CD14-positive monocyte (primary cell): ENCODE measurements at regions of chr14 and their contacts with region 1.

Region 1: DNA sequence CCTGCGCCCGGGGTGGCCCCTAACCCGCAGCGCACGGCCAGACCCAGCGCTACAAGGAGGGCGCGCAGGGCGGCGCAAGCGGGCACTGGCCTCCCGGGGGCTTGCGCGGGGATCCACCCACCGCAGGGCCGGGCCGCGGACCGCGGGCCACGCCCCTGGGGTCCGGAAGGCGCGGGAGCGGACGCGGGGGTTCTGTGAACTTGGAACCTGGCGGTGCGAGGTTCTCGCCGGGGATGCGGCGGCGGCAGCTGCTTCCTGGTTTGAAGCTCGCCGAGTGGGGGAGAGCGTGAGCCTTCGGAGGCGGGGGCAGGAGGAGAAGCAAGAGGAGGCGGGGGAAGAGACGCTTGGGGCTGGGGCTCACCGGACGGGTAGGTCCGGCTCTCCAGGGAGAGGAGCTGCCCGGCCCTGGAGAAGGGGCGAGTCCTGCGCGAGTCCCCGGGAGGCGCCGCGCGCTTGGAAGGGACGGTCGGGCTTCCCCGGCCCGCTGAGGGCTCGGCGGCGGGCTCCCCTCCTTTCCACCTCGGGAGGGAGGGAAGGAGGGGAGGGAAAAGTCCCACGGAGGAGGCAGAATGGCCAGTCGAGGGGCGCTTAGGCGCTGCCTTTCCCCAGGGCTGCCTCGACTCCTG is at the start of gene PRKCH:
- DNase-seq: peak; percentile 67 to 75 (median 69)
- H3K4me3 ChIP-seq: peak within 1 kb of the TSS; percentile 66 to 90 (median 73)
- H3K4me3 Mint-ChIP-seq: peak within 1 kb of the TSS in 1 of 2 donors; percentile 97
- H3K27ac ChIP-seq: peak within 1 kb of the TSS in 1 of 2 donors; percentile 62
- H3K27ac Mint-ChIP-seq: peak within 1 kb of the TSS in 4 of 7 donors; percentile 51 to 84 (median 68)
- H3K4me1 ChIP-seq: peaks cover 18 to 19% of the 10 kb centered on the region in 2 donors
- H3K4me1 Mint-ChIP-seq: peaks cover 23% of the 10 kb centered on the region
- H3K27me3 ChIP-seq: peaks cover 4 to 11% of the 10 kb centered on the region in 2 donors
- H3K27me3 Mint-ChIP-seq: peaks cover 10 to 17% (median 16%) of the 10 kb centered on the region in 3 donors
- CTCF ChIP-seq: peak; percentile 34
- polyA plus RNA-seq, gene PRKCH: 3.6 to 6.2 (median 5.4) TPM

Region 2: GRCh38 chr14:61213191-61213621 is 108.3 kb before region 1 on chr14:
- intact Hi-C with region 1: no loop called
- DNase-seq: no peak
- H3K4me3 ChIP-seq: no peak overlapping the region
- H3K4me3 Mint-ChIP-seq: peak overlapping the region in 1 of 2 donors; percentile 12
- H3K27ac ChIP-seq: no peak overlapping the region
- H3K27ac Mint-ChIP-seq: no peak overlapping the region
- H3K4me1 ChIP-seq: no peaks in the 10 kb centered on the region
- H3K4me1 Mint-ChIP-seq: peaks cover 2% of the 10 kb centered on the region
- H3K27me3 ChIP-seq: peaks cover 3 to 7% of the 10 kb centered on the region in 2 donors
- H3K27me3 Mint-ChIP-seq: peaks cover 9 to 14% (median 11%) of the 10 kb centered on the region in 3 donors
- CTCF ChIP-seq: no peak

Region 3: GRCh38 chr14:61252369-61253063 is 69.0 kb before region 1 on chr14:
- intact Hi-C with region 1: no loop called
- DNase-seq: peak; percentile 60 to 65 (median 63)
- H3K4me3 ChIP-seq: no peak overlapping the region
- H3K4me3 Mint-ChIP-seq: no peak overlapping the region
- H3K27ac ChIP-seq: no peak overlapping the region
- H3K27ac Mint-ChIP-seq: no peak overlapping the region
- H3K4me1 ChIP-seq: peaks cover 12 to 13% of the 10 kb centered on the region in 2 donors
- H3K4me1 Mint-ChIP-seq: peaks cover 22% of the 10 kb centered on the region
- H3K27me3 ChIP-seq: no peaks in the 10 kb centered on the region
- H3K27me3 Mint-ChIP-seq: peaks cover 2 to 11% (median 6%) of the 10 kb centered on the region in 3 donors
- CTCF ChIP-seq: peak; percentile 80

Region 4: DNA sequence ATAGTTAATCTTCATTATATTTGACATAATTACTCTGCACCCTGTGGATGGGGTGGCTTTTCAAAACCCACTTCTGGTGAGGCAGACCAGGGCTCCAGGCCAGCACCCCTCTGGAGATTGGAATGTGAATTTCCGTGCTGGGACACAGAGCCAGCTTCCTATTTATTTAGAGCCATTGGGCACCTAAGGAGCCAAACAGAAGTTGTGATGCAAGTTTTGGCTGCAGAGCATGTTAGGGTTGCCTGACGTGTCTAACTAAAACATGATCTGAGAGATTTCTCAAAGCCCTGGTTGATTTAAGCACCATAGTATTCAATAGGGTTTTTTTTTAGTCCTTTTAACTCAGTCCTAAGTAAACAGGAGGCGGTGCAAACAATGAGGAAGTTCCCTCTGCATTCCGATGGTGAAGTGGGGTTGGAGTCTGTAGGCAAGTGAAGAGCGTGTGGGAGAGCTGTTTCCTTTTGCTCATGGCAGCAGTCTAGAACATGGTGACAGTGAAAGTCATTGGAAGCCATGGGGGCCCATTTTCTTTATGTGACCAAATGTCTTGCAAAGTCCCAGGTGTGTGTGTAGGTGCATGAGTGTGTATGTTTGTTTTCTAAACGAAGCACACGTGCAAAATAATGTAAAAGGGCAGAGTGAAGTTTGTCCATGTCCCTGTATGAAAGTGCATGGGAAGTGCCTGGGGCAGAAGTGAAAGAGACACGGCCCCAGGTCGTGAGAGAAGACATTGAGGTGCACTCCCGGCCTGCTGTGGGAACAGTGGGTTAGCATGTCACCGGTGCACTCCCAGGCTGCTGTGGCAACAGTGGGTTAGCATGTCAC is 117.6 kb after region 1 on chr14:
- intact Hi-C with region 1: loop called in 1 of 2 experiments (anchors 5 kb)
- DNase-seq: peak; percentile 52 to 71 (median 61)
- H3K4me3 ChIP-seq: peak overlapping the region; percentile 19 to 70 (median 43)
- H3K4me3 Mint-ChIP-seq: peak overlapping the region; percentile 80 to 94
- H3K27ac ChIP-seq: peak overlapping the region; percentile 52 to 66
- H3K27ac Mint-ChIP-seq: peak overlapping the region; percentile 73 to 94 (median 84)
- H3K4me1 ChIP-seq: peaks cover 23 to 27% of the 10 kb centered on the region in 2 donors
- H3K4me1 Mint-ChIP-seq: peaks cover 34% of the 10 kb centered on the region
- H3K27me3 ChIP-seq: no peaks in the 10 kb centered on the region
- H3K27me3 Mint-ChIP-seq: peaks cover 0 to 4% (median 1%) of the 10 kb centered on the region in 3 donors
- CTCF ChIP-seq: no peak